ENCODE measurements at regions of chr7 and their contacts with region 1.

Region 1: DNA sequence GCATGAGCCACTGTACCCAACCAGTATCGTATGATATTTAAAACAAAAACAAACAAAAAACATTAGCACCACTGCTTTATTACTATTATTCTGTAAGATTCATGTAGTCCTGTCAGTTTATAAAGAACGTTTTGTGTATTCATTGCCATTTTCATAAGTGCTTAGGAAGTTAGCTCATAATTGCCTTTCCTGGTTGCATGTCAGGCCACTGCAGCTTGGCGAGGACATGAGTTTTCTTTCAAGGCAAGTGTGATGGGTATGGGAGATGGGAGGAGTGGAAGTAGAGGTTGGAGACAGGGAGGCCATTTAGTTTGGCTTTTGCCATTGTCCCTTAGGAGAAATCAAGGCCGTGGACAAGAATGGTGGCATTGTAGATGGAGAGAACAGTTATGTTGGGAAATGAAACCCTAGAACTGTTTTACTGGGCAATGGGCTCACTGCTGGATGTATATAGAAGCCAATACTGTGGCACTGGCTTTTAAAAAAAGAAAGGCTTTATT is 48.9 kb downstream of the TYW1 start:
- DNase-seq: no peak
- H3K4me3 ChIP-seq: no peak overlapping the region
- H3K27ac ChIP-seq: no peak overlapping the region
- H3K4me1 ChIP-seq: no peaks in the 10 kb centered on the region
- H3K27me3 ChIP-seq: no peaks in the 10 kb centered on the region
- CTCF ChIP-seq: no peak

Region 2: DNA sequence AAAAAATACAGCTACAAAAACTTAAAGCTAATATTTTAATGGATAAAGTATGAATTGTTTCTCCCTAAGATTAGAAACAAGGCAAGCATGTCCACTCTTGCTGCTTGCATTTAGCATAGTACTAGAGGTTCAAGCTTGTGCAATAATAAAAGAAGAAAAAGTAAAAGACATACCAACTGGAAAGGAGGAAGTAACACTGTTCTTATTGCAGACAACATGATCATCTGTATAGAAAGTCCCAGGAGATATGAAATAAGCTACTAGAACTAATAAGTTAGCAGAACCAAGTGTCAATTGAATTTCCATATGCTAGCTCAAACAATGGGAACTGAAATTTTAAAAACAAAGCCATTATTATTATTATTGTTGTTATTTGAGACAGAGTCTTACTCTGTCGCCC is 325.0 kb before region 1 on chr7:
- intact Hi-C with region 1: no loop called
- DNase-seq: no peak
- H3K4me3 ChIP-seq: no peak overlapping the region
- H3K27ac ChIP-seq: no peak overlapping the region
- H3K4me1 ChIP-seq: no peaks in the 10 kb centered on the region
- H3K27me3 ChIP-seq: no peaks in the 10 kb centered on the region
- CTCF ChIP-seq: no peak

Region 3: GRCh38 chr7:67006971-67007370 is 38.6 kb before region 1 on chr7:
- intact Hi-C with region 1: no loop called
- DNase-seq: no peak
- H3K4me3 ChIP-seq: no peak overlapping the region
- H3K27ac ChIP-seq: no peak overlapping the region
- H3K4me1 ChIP-seq: no peaks in the 10 kb centered on the region
- H3K27me3 ChIP-seq: no peaks in the 10 kb centered on the region
- CTCF ChIP-seq: no peak

Region 4: DNA sequence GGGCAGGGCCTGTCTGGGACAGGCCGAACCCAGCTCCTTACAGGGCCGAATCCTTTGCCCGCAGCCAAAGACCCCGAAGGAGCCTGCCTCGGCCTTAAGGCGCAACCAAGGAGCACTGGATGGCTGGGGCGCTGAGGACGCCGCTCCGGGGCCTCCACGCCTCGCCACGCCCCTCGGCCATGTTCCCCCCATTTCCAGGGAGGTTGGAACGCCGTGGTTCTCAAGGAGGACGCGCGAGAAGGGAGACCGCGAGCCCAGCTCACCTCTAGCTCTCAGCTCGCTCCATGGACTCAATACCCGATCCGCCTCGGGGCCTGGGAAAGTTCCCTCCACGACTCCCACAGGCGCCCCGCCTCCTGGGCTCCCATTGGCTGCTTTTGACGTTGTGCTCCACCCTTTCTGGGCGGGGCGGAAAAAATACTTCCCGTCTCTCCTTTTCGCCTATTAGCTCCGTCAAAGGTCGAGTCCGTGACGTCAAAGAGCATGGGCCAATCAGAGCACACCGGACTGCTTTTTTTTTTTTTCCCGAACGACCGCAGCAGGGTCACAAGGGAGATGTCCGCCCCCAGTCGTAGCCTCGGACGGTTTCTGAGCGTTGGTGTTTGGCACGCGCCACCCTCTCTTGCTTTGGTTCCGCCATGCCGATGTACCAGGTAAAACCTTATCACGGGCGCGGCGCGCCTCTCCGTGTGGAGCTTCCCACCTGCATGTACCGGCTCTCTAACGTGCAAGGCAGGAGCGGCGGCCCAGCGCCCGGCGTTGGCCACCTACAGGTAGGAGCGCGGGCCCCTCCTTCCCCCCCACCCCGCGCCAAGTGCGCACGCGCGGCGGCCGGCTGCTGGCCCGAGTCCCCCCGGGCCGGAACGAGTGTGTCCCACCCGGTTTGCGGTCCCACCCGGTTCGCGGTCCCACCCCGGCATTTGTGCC is 256.8 kb after region 1 on chr7:
- intact Hi-C with region 1: loop called (anchors 5 kb)
- DNase-seq: peak; percentile 97 to 100
- H3K4me3 ChIP-seq: peak overlapping the region; percentile 62 to 79
- H3K27ac ChIP-seq: peak overlapping the region; percentile 87 to 90
- H3K4me1 ChIP-seq: peaks cover 0 to 10% of the 10 kb centered on the region in 2 donors
- H3K27me3 ChIP-seq: no peaks in the 10 kb centered on the region
- CTCF ChIP-seq: peak; percentile 20 to 45 (median 41)